Calu3 (cell line): ENCODE measurements at regions of chr18 and their contacts with region 1.

Region 1: GRCh38 chr18:32373995-32374394 is 96.7 kb downstream of the GAREM1 start:
- DNase-seq: peak; percentile 53
- H3K4me3 Mint-ChIP-seq: peak overlapping the region; percentile 5
- H3K27ac Mint-ChIP-seq: peak overlapping the region; percentile 78
- H3K4me1 Mint-ChIP-seq: peaks cover 52% of the 10 kb centered on the region
- H3K27me3 Mint-ChIP-seq: no peaks in the 10 kb centered on the region
- CTCF ChIP-seq: no peak

Region 2: GRCh38 chr18:32158108-32158624 is 215.8 kb before region 1 on chr18:
- CTCF ChIA-PET with region 1: no interaction called
- intact Hi-C with region 1: loop called (anchors 5 kb)
- DNase-seq: peak; percentile 78
- H3K4me3 Mint-ChIP-seq: peak overlapping the region; percentile 71
- H3K27ac Mint-ChIP-seq: no peak overlapping the region
- H3K4me1 Mint-ChIP-seq: peaks cover 20% of the 10 kb centered on the region
- H3K27me3 Mint-ChIP-seq: no peaks in the 10 kb centered on the region
- CTCF ChIP-seq: peak; percentile 80

Region 3: DNA sequence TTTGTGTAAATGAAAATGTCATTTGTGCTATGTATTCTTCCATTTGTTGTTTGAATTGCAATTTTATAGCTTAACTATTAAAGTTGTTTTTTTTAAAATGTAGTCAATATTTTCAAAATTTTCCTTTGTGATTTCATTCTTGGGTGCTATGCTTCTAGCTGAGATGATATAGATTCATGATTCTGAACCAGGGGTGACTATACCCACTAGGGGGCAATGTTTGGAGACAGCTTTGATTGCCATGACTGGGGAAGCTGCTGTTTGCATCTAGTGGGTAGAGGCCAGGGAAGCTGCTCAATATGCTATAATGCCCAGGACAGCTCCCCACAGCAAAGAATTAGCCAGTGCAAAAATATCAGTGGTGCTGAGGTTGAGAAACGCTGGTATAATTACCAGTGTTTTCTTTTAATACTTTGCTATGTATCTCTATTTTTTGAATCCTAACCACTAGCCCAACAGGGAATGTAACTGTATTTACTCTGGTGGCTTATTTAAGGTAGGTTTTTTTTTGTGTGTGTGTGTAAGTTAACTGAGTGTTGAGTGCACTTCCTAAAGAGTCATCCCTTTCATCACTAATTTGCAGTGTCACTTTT is 84.4 kb before region 1 on chr18:
- CTCF ChIA-PET with region 1: interaction called, 4 read pairs
- intact Hi-C with region 1: loop called (anchors 5 kb)
- DNase-seq: peak; percentile 77
- H3K4me3 Mint-ChIP-seq: no peak overlapping the region
- H3K27ac Mint-ChIP-seq: no peak overlapping the region
- H3K4me1 Mint-ChIP-seq: no peaks in the 10 kb centered on the region
- H3K27me3 Mint-ChIP-seq: no peaks in the 10 kb centered on the region
- CTCF ChIP-seq: peak; percentile 57

Region 4: GRCh38 chr18:32301976-32302743 is 71.8 kb before region 1 on chr18:
- CTCF ChIA-PET with region 1: no interaction called
- intact Hi-C with region 1: loop called (anchors 5 kb)
- DNase-seq: peak; percentile 40
- H3K4me3 Mint-ChIP-seq: no peak overlapping the region
- H3K27ac Mint-ChIP-seq: peak overlapping the region; percentile 73
- H3K4me1 Mint-ChIP-seq: peaks cover 19% of the 10 kb centered on the region
- H3K27me3 Mint-ChIP-seq: no peaks in the 10 kb centered on the region
- CTCF ChIP-seq: no peak

Region 5: GRCh38 chr18:32502014-32502413 is 128.0 kb after region 1 on chr18:
- CTCF ChIA-PET with region 1: no interaction called
- intact Hi-C with region 1: no loop called
- DNase-seq: no peak
- H3K4me3 Mint-ChIP-seq: no peak overlapping the region
- H3K27ac Mint-ChIP-seq: no peak overlapping the region
- H3K4me1 Mint-ChIP-seq: no peaks in the 10 kb centered on the region
- H3K27me3 Mint-ChIP-seq: peaks cover 5% of the 10 kb centered on the region
- CTCF ChIP-seq: no peak

Region 6: DNA sequence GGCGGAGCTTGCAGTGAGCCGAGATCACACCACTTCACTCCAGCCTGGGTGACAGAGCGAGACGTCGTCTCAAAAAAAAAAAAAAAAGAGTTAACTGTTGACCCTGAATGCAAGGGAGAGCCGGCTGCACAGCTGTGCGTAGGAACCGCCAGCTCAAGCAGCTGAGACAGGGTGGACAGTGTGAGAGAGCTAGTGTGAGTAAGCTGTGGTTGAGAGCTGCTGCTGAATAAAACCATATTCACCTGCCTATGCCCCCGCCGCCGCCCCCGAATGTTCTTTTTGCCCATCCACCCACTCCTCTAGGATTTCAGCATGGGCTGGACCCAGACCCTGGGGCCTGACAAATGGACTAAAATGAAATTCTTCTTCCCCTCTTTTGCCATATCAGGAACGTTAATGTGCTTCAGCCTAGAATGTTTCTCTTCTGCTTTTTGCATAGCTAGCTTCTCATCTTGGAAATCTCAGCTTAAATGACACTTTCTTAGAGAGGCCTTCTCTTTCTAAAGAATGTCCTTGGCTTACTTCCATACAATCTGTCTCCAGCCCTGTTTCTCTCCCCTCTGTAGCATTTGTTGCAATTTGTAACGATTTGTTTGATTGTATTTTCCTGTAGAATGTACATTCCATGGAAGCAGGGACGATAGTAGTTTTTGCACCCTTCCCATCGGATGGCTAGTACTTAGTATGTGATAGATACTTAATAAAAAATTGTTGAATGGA is 256.1 kb after region 1 on chr18:
- CTCF ChIA-PET with region 1: no interaction called
- intact Hi-C with region 1: no loop called
- DNase-seq: no peak
- H3K4me3 Mint-ChIP-seq: no peak overlapping the region
- H3K27ac Mint-ChIP-seq: no peak overlapping the region
- H3K4me1 Mint-ChIP-seq: no peaks in the 10 kb centered on the region
- H3K27me3 Mint-ChIP-seq: peaks cover 21% of the 10 kb centered on the region
- CTCF ChIP-seq: no peak